HCT116 (cell line): ENCODE measurements at regions of chr5 and their contacts with region 1.

Region 1: GRCh38 chr5:164504141-164504772 is 998.8 kb downstream of the MAT2B start:
- DNase-seq: peak; percentile 4
- ATAC-seq: no peak
- H3K4me3 ChIP-seq: no peak overlapping the region
- H3K27ac ChIP-seq: no peak overlapping the region
- H3K4me1 ChIP-seq: no peaks in the 10 kb centered on the region
- H3K27me3 ChIP-seq: no peaks in the 10 kb centered on the region
- CTCF ChIP-seq: peak; percentile 27 to 59 (median 54); a peak in 4 of 6 replicates
- POLR2A ChIP-seq: no peak
- RAD21 ChIP-seq: peak; percentile 63

Region 2: DNA sequence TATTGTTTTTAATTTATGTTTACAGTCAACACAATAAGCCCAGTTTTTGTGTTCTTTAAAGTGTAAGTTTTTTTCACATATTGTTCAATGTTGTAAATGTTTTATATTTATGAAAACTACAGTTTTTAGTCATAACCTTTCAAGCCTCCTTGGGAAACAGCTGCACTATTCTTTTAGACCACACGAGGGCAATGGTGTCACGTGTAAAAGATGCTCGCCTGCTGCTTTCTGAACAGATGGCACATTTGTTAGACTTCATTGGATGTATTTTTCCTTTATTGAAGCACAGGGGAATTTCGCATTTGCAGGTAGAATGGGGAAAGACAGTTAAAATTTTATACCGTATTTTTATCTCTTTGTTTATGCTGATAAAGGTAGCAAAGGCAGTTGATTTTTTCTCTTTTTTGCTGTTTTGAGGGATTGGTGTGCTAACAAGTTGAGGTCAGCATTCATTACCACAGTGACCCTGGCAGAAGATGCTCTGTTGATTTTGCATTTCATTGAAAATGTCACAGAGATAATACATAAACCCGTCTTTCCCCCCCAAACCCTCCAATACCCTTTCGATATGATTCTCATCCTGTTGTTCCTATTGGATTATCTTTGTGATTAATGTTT is 939.8 kb before region 1 on chr5:
- CTCF ChIA-PET with region 1: interaction called, 5 read pairs
- POLR2A ChIA-PET with region 1: no interaction called
- RAD21 ChIA-PET with region 1: interaction called in 1 of 2 experiments, 4 read pairs
- intact Hi-C with region 1: loop called (anchors 1 kb)
- DNase-seq: peak; percentile 48
- ATAC-seq: peak; percentile 59; the same call in 1 of the 2 replicates
- H3K4me3 ChIP-seq: no peak overlapping the region
- H3K27ac ChIP-seq: no peak overlapping the region
- H3K4me1 ChIP-seq: no peaks in the 10 kb centered on the region
- H3K27me3 ChIP-seq: peaks cover 40% of the 10 kb centered on the region; the same call in 1 of the 2 replicates
- CTCF ChIP-seq: peak; percentile 48 to 83 (median 77); a peak in 5 of 6 replicates
- POLR2A ChIP-seq: no peak
- RAD21 ChIP-seq: peak; percentile 83

Region 3: DNA sequence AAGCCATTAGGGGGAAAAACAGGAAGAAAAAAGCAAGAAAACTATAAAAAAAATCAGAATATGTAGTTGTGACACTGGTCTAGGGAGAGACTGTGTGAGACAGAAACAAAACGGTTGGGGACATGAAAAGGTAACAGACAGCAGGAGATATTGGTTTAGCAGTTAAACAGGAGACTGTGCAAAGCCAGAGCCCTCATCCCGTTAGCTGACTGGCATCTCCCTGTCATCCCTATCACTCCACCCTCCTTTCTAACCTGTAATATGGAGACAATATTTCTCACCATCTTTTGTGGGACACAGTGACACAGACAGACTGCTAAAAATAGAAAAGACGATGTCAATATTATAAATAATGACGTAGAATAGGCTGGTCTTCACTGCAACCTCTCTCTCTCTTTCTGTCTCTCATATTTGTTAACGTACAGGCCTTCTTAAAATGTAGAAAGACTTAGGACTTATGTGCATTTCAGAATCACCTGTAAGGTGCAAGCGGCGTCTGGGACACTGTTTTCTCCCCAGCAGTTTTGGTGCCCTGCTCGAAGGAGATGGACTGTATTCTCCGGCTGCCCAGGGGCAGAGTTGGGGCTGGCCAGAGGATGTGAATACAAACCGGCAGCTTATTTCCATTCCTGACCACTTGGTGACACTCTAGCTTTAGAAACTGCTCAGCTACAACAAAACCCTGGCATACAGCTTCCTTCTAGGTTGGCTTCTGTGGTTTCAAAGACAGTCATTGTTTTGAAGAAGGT is 808.3 kb before region 1 on chr5:
- CTCF ChIA-PET with region 1: interaction called, 5 read pairs
- POLR2A ChIA-PET with region 1: no interaction called
- RAD21 ChIA-PET with region 1: no interaction called
- intact Hi-C with region 1: loop called (anchors 1 kb)
- DNase-seq: peak; percentile 19
- ATAC-seq: peak; percentile 93
- H3K4me3 ChIP-seq: no peak overlapping the region
- H3K27ac ChIP-seq: no peak overlapping the region
- H3K4me1 ChIP-seq: no peaks in the 10 kb centered on the region
- H3K27me3 ChIP-seq: peaks cover 7% of the 10 kb centered on the region; the same call in 1 of the 2 replicates
- CTCF ChIP-seq: peak; percentile 23 to 66 (median 47); a peak in 5 of 6 replicates
- POLR2A ChIP-seq: no peak
- RAD21 ChIP-seq: peak; percentile 53

Region 4: DNA sequence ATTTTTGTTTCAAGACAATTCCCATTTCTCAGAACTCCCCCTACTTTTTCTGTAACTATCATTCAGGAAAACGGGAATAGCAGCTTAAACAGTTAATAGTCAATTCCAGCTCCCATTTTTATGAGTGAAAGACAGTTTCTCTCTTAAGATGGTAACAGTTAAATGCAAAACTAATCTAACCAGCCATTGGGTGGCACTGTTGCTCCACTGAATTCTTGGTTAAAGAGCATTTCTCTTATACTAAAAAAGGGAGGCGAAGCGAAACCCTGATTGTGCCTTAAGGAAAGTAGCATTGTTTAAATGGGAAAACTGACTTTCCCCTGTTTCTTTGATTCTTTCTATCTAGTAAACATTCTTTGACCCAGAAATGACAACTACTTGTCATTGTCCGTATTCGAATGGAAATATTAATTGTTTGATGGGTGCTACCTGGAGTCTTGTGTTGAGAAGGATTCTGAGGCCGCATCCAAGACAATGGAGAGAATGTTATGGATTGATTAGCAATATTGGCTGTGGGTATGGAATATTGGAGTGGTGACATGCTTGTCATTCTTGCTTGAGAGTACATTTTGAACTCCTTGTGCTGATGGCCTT is 491.1 kb before region 1 on chr5:
- CTCF ChIA-PET with region 1: interaction called, 3 read pairs
- POLR2A ChIA-PET with region 1: no interaction called
- RAD21 ChIA-PET with region 1: no interaction called
- intact Hi-C with region 1: loop called (anchors 10 kb)
- DNase-seq: peak; percentile 6
- ATAC-seq: no peak
- H3K4me3 ChIP-seq: no peak overlapping the region
- H3K27ac ChIP-seq: no peak overlapping the region
- H3K4me1 ChIP-seq: no peaks in the 10 kb centered on the region
- H3K27me3 ChIP-seq: no peaks in the 10 kb centered on the region
- CTCF ChIP-seq: peak; percentile 13 to 55 (median 31); a peak in 4 of 6 replicates
- POLR2A ChIP-seq: no peak
- RAD21 ChIP-seq: peak; percentile 53

Region 5: DNA sequence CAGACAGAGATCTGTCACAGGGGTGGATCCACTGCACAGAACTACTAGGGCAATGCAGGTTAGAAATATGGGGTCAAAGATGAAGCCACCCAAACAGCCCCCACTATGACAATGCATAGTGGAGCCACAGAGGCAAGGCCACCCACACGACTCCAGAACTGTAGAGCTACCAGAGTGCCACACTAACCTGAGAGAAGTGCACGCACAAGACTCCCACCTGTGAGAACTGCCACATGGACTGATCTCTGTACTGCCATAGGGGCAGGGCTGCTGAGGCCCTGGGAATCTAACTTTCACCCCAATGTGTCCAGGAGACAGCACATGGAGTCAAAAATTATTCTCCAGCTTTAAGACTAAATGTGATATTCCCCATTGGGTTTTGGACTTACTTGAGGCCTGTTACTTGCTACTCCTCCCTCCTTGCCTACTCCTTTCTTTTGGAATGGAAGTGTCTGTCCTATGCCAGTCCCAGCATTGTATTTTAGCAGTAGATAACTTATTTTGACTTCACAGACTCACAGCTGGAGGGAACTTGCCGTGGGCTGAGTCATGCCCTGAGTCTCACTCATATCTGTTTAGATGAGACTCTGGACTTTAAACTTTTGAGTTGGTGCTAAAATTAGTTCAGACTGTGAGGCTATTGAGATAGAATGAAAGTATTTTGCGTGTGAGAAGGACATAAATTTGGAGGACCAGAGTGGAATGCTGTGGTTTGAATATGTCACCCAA is 145.6 kb before region 1 on chr5:
- CTCF ChIA-PET with region 1: no interaction called
- POLR2A ChIA-PET with region 1: no interaction called
- RAD21 ChIA-PET with region 1: no interaction called
- intact Hi-C with region 1: no loop called
- DNase-seq: no peak
- ATAC-seq: no peak
- H3K4me3 ChIP-seq: no peak overlapping the region
- H3K27ac ChIP-seq: no peak overlapping the region
- H3K4me1 ChIP-seq: no peaks in the 10 kb centered on the region
- H3K27me3 ChIP-seq: no peaks in the 10 kb centered on the region
- CTCF ChIP-seq: no peak
- POLR2A ChIP-seq: no peak
- RAD21 ChIP-seq: no peak

Region 6: GRCh38 chr5:164545507-164545906 is 41.2 kb after region 1 on chr5:
- CTCF ChIA-PET with region 1: no interaction called
- POLR2A ChIA-PET with region 1: no interaction called
- RAD21 ChIA-PET with region 1: no interaction called
- intact Hi-C with region 1: no loop called
- DNase-seq: no peak
- ATAC-seq: no peak
- H3K4me3 ChIP-seq: no peak overlapping the region
- H3K27ac ChIP-seq: no peak overlapping the region
- H3K4me1 ChIP-seq: no peaks in the 10 kb centered on the region
- H3K27me3 ChIP-seq: no peaks in the 10 kb centered on the region
- CTCF ChIP-seq: no peak
- POLR2A ChIP-seq: no peak
- RAD21 ChIP-seq: no peak